Activated naive CD4-positive, alpha-beta T cell treated with anti-CD3 and anti-CD28 coated beads for 36 hours (primary cell): ENCODE measurements at regions of chr5 and their contacts with region 1.

Region 1: DNA sequence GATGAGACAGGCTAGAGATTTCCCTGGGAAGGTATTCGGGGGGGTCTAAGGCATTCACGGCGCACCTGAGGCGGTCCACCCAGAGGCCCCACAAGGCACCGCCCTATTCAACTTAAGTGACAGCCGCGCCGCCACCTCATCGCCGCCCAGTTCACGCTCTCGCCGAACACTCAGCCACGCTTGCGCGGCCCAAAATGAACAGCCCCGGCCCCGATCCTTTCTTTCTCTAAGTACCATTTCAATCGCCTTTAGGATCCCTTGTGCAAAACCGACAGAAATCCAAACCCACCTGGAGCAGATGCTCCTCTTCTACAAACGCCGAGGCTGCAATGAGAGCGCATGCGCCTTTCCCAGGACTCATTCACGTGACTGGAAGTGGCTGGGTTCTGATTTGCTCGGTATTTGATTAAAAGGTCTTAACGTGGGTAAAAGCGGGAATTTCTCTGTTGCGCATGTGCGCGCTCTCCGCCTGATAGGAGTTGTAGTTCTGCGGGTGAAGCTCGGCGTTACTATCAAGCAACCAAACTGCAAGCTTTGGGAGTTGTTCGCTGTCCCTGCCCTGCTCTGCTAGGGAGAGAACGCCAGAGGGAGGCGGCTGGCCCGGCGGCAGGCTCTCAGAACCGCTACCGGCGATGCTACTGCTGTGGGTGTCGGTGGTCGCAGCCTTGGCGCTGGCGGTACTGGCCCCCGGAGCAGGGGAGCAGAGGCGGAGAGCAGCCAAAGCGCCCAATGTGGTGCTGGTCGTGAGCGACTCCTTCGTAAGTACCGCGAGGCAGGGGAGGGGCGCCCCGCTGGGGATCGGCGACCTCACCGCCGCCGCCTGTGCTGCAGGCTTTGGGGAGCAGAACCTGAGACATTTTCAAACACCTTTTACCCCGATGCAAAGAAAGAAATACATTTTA is at the starts of genes ARSK and SKIC3:
- DNase-seq: peak; percentile 92
- H3K4me3 Mint-ChIP-seq: peak within 1 kb of the TSS; percentile 87
- H3K27ac Mint-ChIP-seq: peak within 1 kb of the TSS; percentile 93
- H3K4me1 Mint-ChIP-seq: peaks cover 45% of the 10 kb centered on the region
- H3K27me3 Mint-ChIP-seq: no peaks in the 10 kb centered on the region
- total RNA-seq, gene ARSK: 4.5 to 5.1 TPM
- total RNA-seq, gene SKIC3: 67.4 to 69.5 TPM

Region 2: GRCh38 chr5:94618493-94619328 is 936.2 kb before region 1 on chr5 and contains the starts of genes KIAA0825 and SLF1:
- CTCF ChIA-PET with region 1: no interaction called
- intact Hi-C with region 1: loop called (anchors 5 kb)
- DNase-seq: peak; percentile 93
- H3K4me3 Mint-ChIP-seq: peak within 1 kb of the TSS; percentile 96
- H3K27ac Mint-ChIP-seq: peak within 1 kb of the TSS; percentile 93
- H3K4me1 Mint-ChIP-seq: peaks cover 34% of the 10 kb centered on the region
- H3K27me3 Mint-ChIP-seq: no peaks in the 10 kb centered on the region
- total RNA-seq, gene KIAA0825: 0.07 to 0.24 TPM
- total RNA-seq, gene SLF1: 12.4 to 12.8 TPM

Region 3: GRCh38 chr5:95471942-95472341 is 83.0 kb before region 1 on chr5:
- CTCF ChIA-PET with region 1: no interaction called
- intact Hi-C with region 1: no loop called
- DNase-seq: no peak
- H3K4me3 Mint-ChIP-seq: no peak overlapping the region
- H3K27ac Mint-ChIP-seq: no peak overlapping the region
- H3K4me1 Mint-ChIP-seq: no peaks in the 10 kb centered on the region
- H3K27me3 Mint-ChIP-seq: no peaks in the 10 kb centered on the region

Region 4: GRCh38 chr5:95591490-95591901 is 36.6 kb after region 1 on chr5:
- CTCF ChIA-PET with region 1: no interaction called
- intact Hi-C with region 1: loop called (anchors 1 kb)
- DNase-seq: no peak
- H3K4me3 Mint-ChIP-seq: no peak overlapping the region
- H3K27ac Mint-ChIP-seq: no peak overlapping the region
- H3K4me1 Mint-ChIP-seq: peaks cover 25% of the 10 kb centered on the region
- H3K27me3 Mint-ChIP-seq: no peaks in the 10 kb centered on the region

Region 5: DNA sequence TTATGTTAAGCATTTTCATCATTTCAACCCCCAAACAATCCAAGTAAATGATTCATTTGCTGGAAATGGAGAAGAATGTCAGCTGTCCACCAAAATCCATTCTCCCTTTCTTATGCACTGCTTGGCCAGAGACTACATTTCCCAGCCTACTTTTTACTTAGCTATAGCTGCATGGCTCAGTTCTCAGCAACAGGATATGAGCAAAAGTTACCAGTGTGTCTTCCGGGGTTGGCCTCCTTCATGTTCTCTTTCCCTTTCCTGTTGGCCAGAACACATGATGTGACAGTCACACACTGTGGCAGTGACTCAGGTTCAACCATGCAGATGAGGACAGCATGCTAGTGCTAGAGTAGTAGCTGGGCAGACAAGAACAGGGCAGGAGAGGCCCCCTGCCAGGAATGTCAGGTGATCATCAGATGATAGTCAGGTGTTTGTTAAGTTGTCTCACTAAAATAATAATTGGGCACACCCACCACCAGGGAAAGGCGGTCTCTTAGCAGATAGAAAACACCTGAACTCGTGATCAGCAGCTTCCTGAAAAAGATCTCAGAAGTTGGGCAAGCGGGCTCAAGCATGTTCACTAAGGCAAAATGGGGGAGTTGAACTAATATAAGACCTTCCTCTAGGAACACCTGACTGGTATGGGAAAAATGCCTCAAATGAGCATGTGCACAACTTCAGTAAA is 77.2 kb after region 1 on chr5:
- CTCF ChIA-PET with region 1: no interaction called
- intact Hi-C with region 1: loop called (anchors 1 kb)
- DNase-seq: peak; percentile 89
- H3K4me3 Mint-ChIP-seq: peak overlapping the region; percentile 53
- H3K27ac Mint-ChIP-seq: peak overlapping the region; percentile 94
- H3K4me1 Mint-ChIP-seq: peaks cover 20% of the 10 kb centered on the region
- H3K27me3 Mint-ChIP-seq: no peaks in the 10 kb centered on the region

Region 6: DNA sequence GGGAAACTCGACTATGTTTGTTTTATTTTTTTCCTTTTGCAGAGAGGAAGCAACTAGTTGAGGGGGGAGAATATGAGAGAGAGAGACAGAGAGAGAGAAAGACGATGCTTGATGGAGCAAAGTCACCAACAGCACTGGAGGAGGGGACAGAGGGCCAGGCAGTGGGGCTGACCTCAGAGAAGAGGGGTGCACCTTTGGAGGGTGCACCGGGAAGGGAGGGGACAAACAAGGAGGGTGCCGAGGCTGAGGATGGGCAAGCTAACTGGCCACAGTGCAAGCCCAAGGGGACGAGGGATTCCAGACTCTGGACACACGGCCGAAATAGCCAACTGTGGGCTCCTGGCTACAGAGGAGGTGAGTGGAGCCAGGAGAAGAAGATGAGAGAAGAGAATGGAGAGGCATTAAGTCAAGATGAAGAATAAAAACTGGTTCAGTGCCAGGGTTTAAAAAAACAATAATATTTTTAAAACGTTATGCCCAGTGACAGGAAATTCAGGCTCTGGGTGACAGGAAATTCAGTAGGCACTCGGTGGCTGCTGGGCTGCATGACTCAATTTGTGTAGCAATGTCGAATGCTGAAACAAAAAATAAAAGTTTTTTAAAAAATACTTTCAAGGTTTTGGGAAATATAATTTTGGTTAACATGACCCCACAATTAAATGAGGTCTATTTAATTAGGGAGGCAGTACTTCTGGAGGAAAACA is 280.9 kb after region 1 on chr5:
- CTCF ChIA-PET with region 1: no interaction called
- intact Hi-C with region 1: loop called (anchors 2 kb)
- DNase-seq: peak; percentile 57
- H3K4me3 Mint-ChIP-seq: peak overlapping the region; percentile 77
- H3K27ac Mint-ChIP-seq: peak overlapping the region; percentile 92
- H3K4me1 Mint-ChIP-seq: peaks cover 47% of the 10 kb centered on the region
- H3K27me3 Mint-ChIP-seq: no peaks in the 10 kb centered on the region